Psoas muscle (tissue), 8 donors: ENCODE measurements at regions of chr11 and their contacts with region 1.

Region 1: GRCh38 chr11:79708300-79708932 is 267.6 kb upstream of the TENM4 start:
- DNase-seq: no peak
- ATAC-seq: peak in 1 of 4 donors; percentile 51
- H3K4me3 ChIP-seq: no peak overlapping the region
- H3K27ac ChIP-seq: no peak overlapping the region
- H3K4me1 ChIP-seq: no peaks in the 10 kb centered on the region
- H3K27me3 ChIP-seq: no peaks in the 10 kb centered on the region
- CTCF ChIP-seq: peak; percentile 14

Region 2: DNA sequence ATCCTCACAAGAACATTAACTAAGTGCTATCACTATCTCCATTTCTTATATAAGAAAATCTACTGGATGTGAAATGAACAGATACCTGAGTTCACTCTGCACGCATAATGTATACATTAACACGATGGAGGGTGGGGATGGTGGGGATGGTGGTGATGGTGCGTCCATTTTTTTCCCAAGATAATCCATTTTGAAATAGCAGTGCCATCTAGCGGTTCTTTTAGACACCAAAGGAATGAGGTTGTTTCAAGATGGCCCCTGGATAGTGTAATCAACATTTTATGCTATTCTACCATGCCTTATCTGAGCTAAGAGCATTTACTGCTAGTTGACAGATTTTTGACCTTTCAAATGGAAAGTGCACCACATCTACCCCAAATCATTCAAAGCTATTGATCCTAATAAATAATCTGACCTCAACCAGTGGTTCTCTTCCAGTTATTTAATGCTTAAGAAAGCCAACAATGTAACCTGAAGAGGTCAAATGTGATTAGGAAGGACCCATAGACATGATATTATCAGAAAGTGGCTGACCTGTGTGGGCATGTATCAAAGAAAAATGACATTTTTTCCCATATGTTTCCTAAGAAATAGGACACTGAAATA is 447.1 kb after region 1 on chr11:
- intact Hi-C with region 1: loop called in 1 of 2 experiments (anchors 10 kb)
- DNase-seq: no peak
- ATAC-seq: no peak
- H3K4me3 ChIP-seq: no peak overlapping the region
- H3K27ac ChIP-seq: no peak overlapping the region
- H3K4me1 ChIP-seq: no peaks in the 10 kb centered on the region
- H3K27me3 ChIP-seq: no peaks in the 10 kb centered on the region
- CTCF ChIP-seq: peak; percentile 27